ENCODE measurements at regions of chr5 and their contacts with region 1.

Region 1: GRCh38 chr5:81506900-81507588 is 113.1 kb upstream of the ACOT12 start:
- DNase-seq: peak; percentile 29
- ATAC-seq: peak; percentile 99 to 100

Region 2: GRCh38 chr5:81450940-81451339 is 56.1 kb before region 1 on chr5:
- intact Hi-C with region 1: no loop called
- DNase-seq: no peak
- ATAC-seq: no peak

Region 3: GRCh38 chr5:81469676-81470075 is 37.4 kb before region 1 on chr5:
- intact Hi-C with region 1: no loop called
- DNase-seq: no peak
- ATAC-seq: no peak

Region 4: GRCh38 chr5:81675846-81676245 is 168.8 kb after region 1 on chr5:
- intact Hi-C with region 1: no loop called
- DNase-seq: no peak
- ATAC-seq: no peak

Region 5: DNA sequence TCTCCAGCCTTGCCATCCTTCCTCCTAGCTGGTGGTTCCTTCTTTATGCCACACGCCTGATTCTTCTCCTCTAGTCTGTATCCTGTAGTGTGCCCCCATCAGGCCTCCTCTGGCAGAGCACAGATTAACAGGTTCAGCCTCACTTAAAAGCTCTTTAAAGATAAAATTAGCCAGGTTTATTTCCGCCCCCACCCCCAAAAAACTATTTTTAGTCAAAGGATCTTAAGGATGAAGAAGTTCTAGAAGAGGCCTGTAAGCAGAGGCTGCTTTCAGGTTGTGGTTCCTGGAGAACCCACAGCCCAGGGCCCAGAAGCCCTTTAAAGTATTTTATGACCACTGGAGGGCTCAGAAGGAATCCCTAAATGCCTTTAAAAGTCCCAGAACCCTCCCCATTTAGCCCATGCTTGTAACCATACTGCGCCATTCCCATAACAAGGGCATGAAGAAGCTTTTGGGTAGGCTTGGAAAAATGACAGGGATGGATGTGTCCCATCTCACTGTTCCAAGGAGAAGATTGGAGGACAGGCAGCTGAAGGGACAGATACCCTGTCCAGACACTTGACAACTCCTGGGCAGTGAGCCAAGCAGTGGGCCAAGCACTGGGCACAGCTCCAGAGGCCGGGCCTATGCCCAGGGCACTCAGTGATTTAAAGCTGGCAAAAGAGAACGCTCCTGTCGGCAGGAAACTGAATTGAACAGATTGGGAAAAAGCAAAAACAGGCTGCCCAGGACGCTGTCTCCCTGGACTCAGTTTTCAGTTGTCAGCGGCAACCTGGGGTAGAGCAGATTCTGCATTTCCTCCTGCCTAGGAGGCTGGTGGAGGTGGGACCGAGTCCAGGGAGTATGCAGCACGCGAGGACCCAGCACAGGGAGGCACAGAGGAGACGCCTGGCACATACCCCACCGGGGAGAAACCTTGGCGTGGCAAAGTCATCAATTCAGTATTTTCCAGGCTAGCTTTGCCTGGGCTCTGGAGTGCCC is 350.2 kb after region 1 on chr5:
- intact Hi-C with region 1: loop called in 1 of 2 experiments (anchors 5 kb)
- DNase-seq: peak; percentile 85
- ATAC-seq: peak; percentile 92 to 93

Region 6: DNA sequence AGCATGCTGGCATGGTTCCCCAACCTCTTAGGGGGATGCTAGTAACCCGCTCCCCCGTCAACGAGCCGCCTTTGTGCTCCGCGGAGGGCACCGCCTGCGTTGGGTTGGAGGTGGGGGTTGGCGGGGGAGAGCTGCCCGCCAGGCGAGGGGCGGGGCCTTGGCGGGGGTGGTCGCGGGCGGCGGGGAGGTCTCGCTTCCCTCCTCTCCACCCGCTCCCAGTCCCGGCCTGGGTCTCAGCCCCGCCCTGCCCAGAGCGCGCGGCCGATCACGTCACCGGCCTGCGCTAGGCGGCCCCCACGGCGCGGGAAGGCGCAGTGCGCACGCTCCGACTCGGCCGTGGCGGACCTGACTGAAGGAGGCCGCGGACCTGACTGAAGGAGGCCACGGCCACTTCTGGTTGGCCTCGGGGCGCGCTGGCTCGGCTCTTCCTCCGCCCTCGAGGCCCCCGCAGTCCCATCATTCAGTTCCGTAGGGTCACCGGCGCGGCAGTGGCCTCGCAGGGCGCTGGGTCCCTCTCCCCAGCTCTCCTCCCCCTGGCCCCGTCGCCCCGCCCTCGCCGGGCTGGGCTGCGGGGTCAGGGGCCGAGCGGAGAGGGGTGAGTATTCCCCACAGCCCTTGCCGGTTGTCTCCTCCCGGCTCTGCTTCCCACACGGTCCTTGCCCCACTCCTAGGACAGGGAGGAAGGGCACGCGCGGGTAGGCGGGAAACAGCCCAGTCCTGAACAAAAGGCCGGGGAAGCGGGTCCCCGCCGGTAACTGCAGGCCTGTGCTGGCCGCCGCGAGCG is 464.9 kb after region 1 on chr5 and contains the start of gene ATG10:
- intact Hi-C with region 1: loop called in 1 of 2 experiments (anchors 5 kb)
- DNase-seq: peak; percentile 92
- ATAC-seq: peak; percentile 99 to 100
- total RNA-seq, gene ATG10: 5.1 to 6.2 TPM

Region 7: DNA sequence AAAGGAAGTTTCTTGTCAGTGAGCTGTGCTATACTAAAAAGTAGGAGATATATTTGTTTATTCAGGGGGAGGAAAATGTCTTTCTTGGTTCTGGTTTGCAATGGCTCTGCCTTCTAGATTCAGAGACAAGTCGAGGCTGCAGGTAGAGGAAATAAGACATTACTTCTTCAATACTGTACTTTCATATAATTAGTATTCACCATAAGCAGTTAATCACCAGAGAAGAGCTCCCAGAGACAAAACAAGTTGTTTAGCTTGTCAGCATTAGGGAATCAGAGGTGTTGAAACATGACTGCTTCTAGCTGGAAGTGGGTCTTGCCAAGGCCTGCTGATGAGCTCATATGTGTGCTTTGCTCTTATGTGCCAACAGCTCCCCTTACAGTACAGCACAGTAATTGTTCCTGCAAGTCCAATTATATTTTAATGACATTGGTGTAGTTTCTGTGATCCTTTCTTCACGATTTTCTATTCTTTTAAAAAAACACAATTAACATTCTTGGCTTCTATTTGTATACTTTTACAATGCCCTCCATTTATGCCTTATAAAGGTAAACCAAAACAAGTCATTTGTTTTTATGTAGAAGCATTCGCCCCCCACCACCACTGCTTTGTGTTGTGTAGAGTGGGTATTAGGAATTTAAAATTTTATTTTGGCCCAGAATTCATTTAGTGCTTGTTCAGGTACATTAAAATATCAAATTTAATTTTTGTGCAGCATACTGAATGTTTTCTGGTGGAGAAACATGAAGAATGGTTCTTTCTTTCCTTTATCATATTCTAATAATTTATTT is 658.9 kb after region 1 on chr5:
- intact Hi-C with region 1: loop called in 1 of 2 experiments (anchors 2 kb)
- DNase-seq: peak; percentile 73
- ATAC-seq: peak; percentile 99 to 100